Calu3 (cell line): ENCODE measurements at regions of chr20 and their contacts with region 1.

Region 1: GRCh38 chr20:54863058-54863700 is 387.8 kb downstream of the DOK5 start:
- DNase-seq: no peak
- H3K4me3 Mint-ChIP-seq: no peak overlapping the region
- H3K27ac Mint-ChIP-seq: no peak overlapping the region
- H3K4me1 Mint-ChIP-seq: no peaks in the 10 kb centered on the region
- H3K27me3 Mint-ChIP-seq: peaks cover 14% of the 10 kb centered on the region
- CTCF ChIP-seq: no peak

Region 2: GRCh38 chr20:54828359-54829150 is 34.6 kb before region 1 on chr20:
- CTCF ChIA-PET with region 1: no interaction called
- intact Hi-C with region 1: loop called (anchors 1 kb)
- DNase-seq: no peak
- H3K4me3 Mint-ChIP-seq: no peak overlapping the region
- H3K27ac Mint-ChIP-seq: no peak overlapping the region
- H3K4me1 Mint-ChIP-seq: no peaks in the 10 kb centered on the region
- H3K27me3 Mint-ChIP-seq: no peaks in the 10 kb centered on the region
- CTCF ChIP-seq: no peak

Region 3: DNA sequence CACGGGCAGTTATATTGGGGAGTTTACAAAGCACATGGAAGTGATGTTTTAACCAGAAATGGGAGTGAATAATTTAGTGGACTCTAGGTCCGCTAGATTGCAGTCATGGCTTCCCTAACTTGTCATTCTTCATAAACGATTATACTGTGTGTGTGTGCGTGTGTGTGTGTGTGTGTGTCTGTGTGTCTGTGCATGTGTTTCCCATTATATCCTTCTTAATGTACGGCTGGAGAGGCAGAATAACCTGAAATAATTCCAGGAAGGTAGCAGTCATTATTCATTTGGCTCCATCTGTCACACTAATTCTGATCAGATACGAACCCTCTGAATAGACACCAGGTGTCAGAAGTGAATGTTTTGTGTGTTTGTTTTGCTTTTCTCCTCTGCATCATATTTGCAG is 15.0 kb before region 1 on chr20:
- CTCF ChIA-PET with region 1: no interaction called
- intact Hi-C with region 1: no loop called
- DNase-seq: no peak
- H3K4me3 Mint-ChIP-seq: no peak overlapping the region
- H3K27ac Mint-ChIP-seq: no peak overlapping the region
- H3K4me1 Mint-ChIP-seq: no peaks in the 10 kb centered on the region
- H3K27me3 Mint-ChIP-seq: peaks cover 46% of the 10 kb centered on the region
- CTCF ChIP-seq: no peak

Region 4: GRCh38 chr20:54938180-54939068 is 75.2 kb after region 1 on chr20:
- CTCF ChIA-PET with region 1: no interaction called
- intact Hi-C with region 1: no loop called
- DNase-seq: no peak
- H3K4me3 Mint-ChIP-seq: no peak overlapping the region
- H3K27ac Mint-ChIP-seq: no peak overlapping the region
- H3K4me1 Mint-ChIP-seq: no peaks in the 10 kb centered on the region
- H3K27me3 Mint-ChIP-seq: no peaks in the 10 kb centered on the region
- CTCF ChIP-seq: no peak

Region 5: GRCh38 chr20:55140631-55141030 is 277.5 kb after region 1 on chr20:
- CTCF ChIA-PET with region 1: no interaction called
- intact Hi-C with region 1: no loop called
- DNase-seq: no peak
- H3K4me3 Mint-ChIP-seq: no peak overlapping the region
- H3K27ac Mint-ChIP-seq: no peak overlapping the region
- H3K4me1 Mint-ChIP-seq: no peaks in the 10 kb centered on the region
- H3K27me3 Mint-ChIP-seq: no peaks in the 10 kb centered on the region
- CTCF ChIP-seq: no peak